Breast epithelium (tissue), 4 donors: ENCODE measurements at regions of chr6 and their contacts with region 1.

Region 1: DNA sequence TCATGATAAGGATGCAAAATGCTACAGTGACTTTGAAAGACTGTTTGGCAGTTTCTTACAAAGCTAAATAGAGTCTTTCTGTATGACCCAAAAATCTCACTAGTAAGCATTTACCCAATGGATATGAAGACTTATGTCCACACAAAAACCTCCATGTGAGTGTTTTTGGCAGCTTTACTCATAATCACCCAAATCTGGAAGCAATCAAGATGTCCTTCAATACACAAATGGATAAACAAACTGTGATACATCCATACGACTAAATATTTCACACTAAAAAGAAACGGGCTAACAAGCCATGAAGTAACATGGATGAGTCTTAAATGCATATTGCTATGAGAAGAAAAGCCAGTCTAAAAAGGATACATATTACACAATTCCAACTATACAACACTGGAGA is 117.2 kb downstream of the PDE10A start:
- DNase-seq: no peak
- H3K4me3 ChIP-seq: no peak overlapping the region
- H3K27ac ChIP-seq: no peak overlapping the region
- H3K4me1 ChIP-seq: no peaks in the 10 kb centered on the region
- H3K27me3 ChIP-seq: no peaks in the 10 kb centered on the region
- CTCF ChIP-seq: no peak
- POLR2A ChIP-seq: no peak

Region 2: GRCh38 chr6:165025040-165025439 is 520.8 kb before region 1 on chr6:
- intact Hi-C with region 1: loop called (anchors 5 kb)
- DNase-seq: no peak
- H3K4me3 ChIP-seq: no peak overlapping the region
- H3K27ac ChIP-seq: no peak overlapping the region
- H3K4me1 ChIP-seq: no peaks in the 10 kb centered on the region
- H3K27me3 ChIP-seq: no peaks in the 10 kb centered on the region
- CTCF ChIP-seq: no peak
- POLR2A ChIP-seq: no peak

Region 3: GRCh38 chr6:165404697-165405096 is 141.1 kb before region 1 on chr6:
- intact Hi-C with region 1: no loop called
- DNase-seq: no peak
- H3K4me3 ChIP-seq: no peak overlapping the region
- H3K27ac ChIP-seq: no peak overlapping the region
- H3K4me1 ChIP-seq: no peaks in the 10 kb centered on the region
- H3K27me3 ChIP-seq: no peaks in the 10 kb centered on the region
- CTCF ChIP-seq: no peak
- POLR2A ChIP-seq: no peak

Region 4: GRCh38 chr6:165605901-165606664 is 60.3 kb after region 1 on chr6:
- intact Hi-C with region 1: loop called (anchors 2 kb)
- DNase-seq: no peak
- H3K4me3 ChIP-seq: no peak overlapping the region
- H3K27ac ChIP-seq: no peak overlapping the region
- H3K4me1 ChIP-seq: no peaks in the 10 kb centered on the region
- H3K27me3 ChIP-seq: no peaks in the 10 kb centered on the region
- CTCF ChIP-seq: no peak
- POLR2A ChIP-seq: no peak

Region 5: DNA sequence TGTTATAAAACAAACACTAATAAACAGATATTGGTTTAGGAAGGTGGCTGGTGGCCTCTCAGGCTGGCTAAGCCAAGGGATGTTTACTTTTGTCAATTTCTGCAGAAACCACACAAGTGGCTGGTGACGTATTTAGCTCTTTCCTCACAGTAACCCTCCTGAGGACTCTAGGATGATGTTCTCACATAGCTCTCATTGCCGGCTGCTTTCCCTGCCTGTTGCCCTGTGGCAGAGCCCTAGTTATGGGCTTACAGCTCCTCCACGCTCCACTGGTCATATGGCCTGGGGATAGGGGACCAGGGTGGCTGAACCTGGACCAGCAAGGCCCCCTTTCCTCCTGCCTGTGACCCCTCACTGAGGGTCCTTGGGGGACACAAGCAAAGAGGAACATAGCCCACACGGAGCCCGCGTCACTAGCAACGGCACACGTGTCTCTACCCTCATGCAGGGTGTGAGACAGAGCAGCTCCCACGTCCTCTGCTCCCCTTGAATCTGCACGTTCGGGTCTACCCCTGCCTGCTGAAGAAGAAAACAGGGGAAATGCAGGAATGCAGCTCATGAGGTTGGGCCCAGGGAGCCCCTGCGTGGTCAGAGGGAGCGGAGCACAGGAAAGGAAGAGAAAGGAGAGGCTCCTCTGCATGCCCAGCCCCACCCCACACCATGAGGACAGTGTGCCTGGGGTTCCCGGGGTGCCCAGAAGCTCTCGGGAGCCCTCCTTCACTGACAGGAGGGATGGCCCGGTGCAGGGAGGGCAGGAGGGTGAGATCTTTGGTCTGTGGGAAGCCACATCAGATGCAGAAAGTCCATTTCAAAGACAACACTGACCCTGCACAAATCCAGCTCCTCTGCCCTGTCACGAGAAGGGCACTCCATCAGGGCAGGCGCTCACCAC is 1026.8 kb after region 1 on chr6:
- intact Hi-C with region 1: no loop called
- DNase-seq: no peak
- H3K4me3 ChIP-seq: no peak overlapping the region
- H3K27ac ChIP-seq: no peak overlapping the region
- H3K4me1 ChIP-seq: no peaks in the 10 kb centered on the region
- H3K27me3 ChIP-seq: no peaks in the 10 kb centered on the region
- CTCF ChIP-seq: no peak
- POLR2A ChIP-seq: no peak